Naive thymus-derived CD4-positive, alpha-beta T cell (primary cell): ENCODE measurements at regions of chr5 and their contacts with region 1.

Region 1: DNA sequence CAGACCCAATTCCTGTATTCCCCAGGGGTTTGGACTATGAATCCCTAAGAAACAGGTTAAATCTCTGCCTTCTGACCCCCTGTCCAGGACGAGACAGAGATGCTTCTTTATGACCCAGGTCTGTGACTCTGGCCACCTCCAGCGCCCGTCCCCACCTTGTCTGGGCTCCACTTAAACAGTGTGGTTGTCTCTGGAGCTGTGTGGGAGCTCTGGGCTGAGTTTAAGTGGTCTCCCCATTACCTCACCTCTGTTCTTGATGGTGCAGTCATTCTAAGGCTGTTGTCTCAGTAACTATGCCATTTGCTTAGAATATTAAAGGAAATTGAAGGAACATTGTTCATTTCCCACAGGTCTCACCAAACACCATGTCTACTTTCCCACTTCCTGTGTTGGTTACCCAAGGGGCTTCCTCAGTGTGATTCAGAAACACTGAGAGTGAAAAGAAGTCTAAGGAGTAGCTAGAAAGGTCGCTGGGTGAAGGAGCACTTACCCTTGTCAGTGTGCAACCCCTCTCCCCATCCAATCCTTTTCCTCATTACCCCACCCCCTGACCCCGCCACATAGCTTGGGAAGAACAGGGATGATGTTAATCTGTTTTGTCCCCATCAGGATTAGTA is 127.8 kb upstream of the CKMT2 start:
- DNase-seq: no peak
- ATAC-seq: no peak
- H3K4me3 ChIP-seq: no peak overlapping the region
- H3K4me3 Mint-ChIP-seq: peak overlapping the region in 3 of 10 donors; percentile 31 to 47 (median 45)
- H3K27ac ChIP-seq: no peak overlapping the region
- H3K27ac Mint-ChIP-seq: peak overlapping the region; percentile 21 to 86 (median 64)
- H3K4me1 ChIP-seq: peaks cover 12% of the 10 kb centered on the region in 2 donors
- H3K4me1 Mint-ChIP-seq: peaks cover 10 to 40% (median 33%) of the 10 kb centered on the region in 7 donors
- H3K27me3 ChIP-seq: no peaks in the 10 kb centered on the region
- H3K27me3 Mint-ChIP-seq: no peaks in the 10 kb centered on the region

Region 2: DNA sequence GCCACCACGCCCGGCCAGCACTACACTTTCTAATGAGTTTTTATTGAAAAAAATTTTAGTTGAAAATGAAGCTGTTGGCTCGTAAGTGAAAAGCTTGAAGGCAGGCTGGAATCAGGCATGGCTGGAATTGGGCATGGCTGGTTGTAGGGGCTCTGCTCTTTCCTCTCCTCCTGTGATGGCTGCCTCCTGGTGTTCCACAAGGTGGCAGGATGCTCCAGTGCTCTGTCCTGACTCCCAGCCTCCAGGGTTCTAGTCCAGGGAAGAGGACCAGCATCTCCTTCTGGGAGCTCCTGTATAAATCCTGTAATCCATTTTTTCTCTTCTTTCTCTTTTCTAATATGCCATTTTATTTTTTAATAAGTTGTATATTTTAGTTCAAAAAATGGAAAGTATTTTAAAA is 393.4 kb before region 1 on chr5:
- CTCF ChIA-PET with region 1: no interaction called
- POLR2A ChIA-PET with region 1: no interaction called
- intact Hi-C with region 1: loop called in 1 of 2 experiments (anchors 1 kb)
- DNase-seq: no peak
- ATAC-seq: no peak
- H3K4me3 ChIP-seq: no peak overlapping the region
- H3K4me3 Mint-ChIP-seq: no peak overlapping the region
- H3K27ac ChIP-seq: no peak overlapping the region
- H3K27ac Mint-ChIP-seq: peak overlapping the region in 1 of 9 donors; percentile 72
- H3K4me1 ChIP-seq: no peaks in the 10 kb centered on the region
- H3K4me1 Mint-ChIP-seq: peaks cover 0 to 42% (median 4%) of the 10 kb centered on the region in 7 donors
- H3K27me3 ChIP-seq: no peaks in the 10 kb centered on the region
- H3K27me3 Mint-ChIP-seq: no peaks in the 10 kb centered on the region

Region 3: DNA sequence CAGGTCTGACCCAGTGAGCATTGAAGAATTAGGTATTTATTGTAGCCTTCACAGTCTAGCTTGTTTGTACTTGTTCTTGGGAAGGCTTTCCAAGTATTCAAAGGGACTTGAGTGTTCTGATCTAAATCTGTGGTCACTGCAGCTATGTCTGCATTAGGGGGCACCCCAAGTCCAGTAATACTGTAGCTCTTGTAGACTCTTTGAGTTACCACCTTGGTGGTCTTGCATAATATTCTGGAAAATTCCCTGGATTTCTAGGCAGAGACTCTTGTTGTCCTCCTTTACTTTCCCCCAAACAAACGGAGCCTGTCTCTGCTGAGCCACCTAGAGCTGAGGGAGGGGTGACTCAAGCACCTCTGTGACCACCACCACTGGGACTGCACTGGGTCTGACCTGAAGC is 301.0 kb before region 1 on chr5:
- CTCF ChIA-PET with region 1: no interaction called
- POLR2A ChIA-PET with region 1: no interaction called
- intact Hi-C with region 1: loop called in 1 of 2 experiments (anchors 5 kb)
- DNase-seq: peak in 1 of 9 donors; percentile 5
- ATAC-seq: no peak
- H3K4me3 ChIP-seq: no peak overlapping the region
- H3K4me3 Mint-ChIP-seq: no peak overlapping the region
- H3K27ac ChIP-seq: no peak overlapping the region
- H3K27ac Mint-ChIP-seq: peak overlapping the region in 1 of 9 donors; percentile 57
- H3K4me1 ChIP-seq: no peaks in the 10 kb centered on the region
- H3K4me1 Mint-ChIP-seq: peaks cover 0 to 13% (median 0%) of the 10 kb centered on the region in 7 donors
- H3K27me3 ChIP-seq: no peaks in the 10 kb centered on the region
- H3K27me3 Mint-ChIP-seq: no peaks in the 10 kb centered on the region

Region 4: GRCh38 chr5:80935811-80936385 is 169.5 kb before region 1 on chr5:
- CTCF ChIA-PET with region 1: interaction called, 38 read pairs
- POLR2A ChIA-PET with region 1: no interaction called
- intact Hi-C with region 1: loop called in 1 of 2 experiments (anchors 1 kb)
- DNase-seq: peak in 1 of 9 donors; percentile 15
- ATAC-seq: no peak
- H3K4me3 ChIP-seq: no peak overlapping the region
- H3K4me3 Mint-ChIP-seq: no peak overlapping the region
- H3K27ac ChIP-seq: no peak overlapping the region
- H3K27ac Mint-ChIP-seq: peak overlapping the region in 2 of 9 donors; percentile 16 to 69
- H3K4me1 ChIP-seq: no peaks in the 10 kb centered on the region
- H3K4me1 Mint-ChIP-seq: peaks cover 0 to 13% (median 7%) of the 10 kb centered on the region in 7 donors
- H3K27me3 ChIP-seq: no peaks in the 10 kb centered on the region
- H3K27me3 Mint-ChIP-seq: no peaks in the 10 kb centered on the region

Region 5: DNA sequence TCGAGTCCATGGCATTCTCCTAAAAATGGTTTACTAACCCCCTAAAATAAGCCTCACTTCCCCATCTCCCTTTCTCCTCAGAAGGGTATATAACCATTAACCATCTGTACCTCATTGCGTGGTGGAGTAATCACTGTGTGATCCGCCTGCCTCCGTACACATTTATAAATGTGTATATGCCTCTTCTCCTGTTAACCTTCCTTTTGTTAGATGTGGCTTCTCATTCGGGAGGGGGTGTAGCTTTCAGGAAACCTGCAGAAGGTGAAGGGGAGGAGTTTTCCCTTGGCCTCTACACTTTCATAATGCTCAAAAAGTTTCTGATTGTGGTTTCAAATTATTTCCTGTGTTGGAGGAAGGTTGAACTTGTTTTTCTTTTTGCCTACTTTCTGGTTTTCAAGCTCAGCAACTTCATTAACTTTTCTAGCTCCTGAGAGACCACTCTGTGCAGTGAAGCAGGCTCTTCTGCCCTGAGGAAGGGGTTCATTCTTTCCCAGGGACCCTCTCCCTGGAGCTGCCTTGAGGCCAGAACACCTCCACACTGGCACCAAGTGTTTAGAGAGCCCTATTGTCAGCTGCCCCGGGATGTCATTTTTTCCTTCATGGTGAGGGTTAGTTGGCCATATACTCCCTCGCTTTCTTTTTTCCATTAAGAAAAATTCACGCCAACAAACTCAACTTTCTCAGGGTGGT is 98.3 kb before region 1 on chr5:
- CTCF ChIA-PET with region 1: interaction called, 3 read pairs
- POLR2A ChIA-PET with region 1: interaction called, 3 read pairs
- intact Hi-C with region 1: loop called in 1 of 2 experiments (anchors 1 kb)
- DNase-seq: peak in 8 of 9 donors; percentile 48 to 91 (median 88)
- ATAC-seq: peak; percentile 95
- H3K4me3 ChIP-seq: peak overlapping the region; percentile 53
- H3K4me3 Mint-ChIP-seq: peak overlapping the region; percentile 75 to 95 (median 89)
- H3K27ac ChIP-seq: peak overlapping the region; percentile 80
- H3K27ac Mint-ChIP-seq: peak overlapping the region; percentile 92 to 100 (median 95)
- H3K4me1 ChIP-seq: peaks cover 35 to 64% of the 10 kb centered on the region in 2 donors
- H3K4me1 Mint-ChIP-seq: peaks cover 45 to 93% (median 80%) of the 10 kb centered on the region in 7 donors
- H3K27me3 ChIP-seq: no peaks in the 10 kb centered on the region
- H3K27me3 Mint-ChIP-seq: no peaks in the 10 kb centered on the region

Region 6: DNA sequence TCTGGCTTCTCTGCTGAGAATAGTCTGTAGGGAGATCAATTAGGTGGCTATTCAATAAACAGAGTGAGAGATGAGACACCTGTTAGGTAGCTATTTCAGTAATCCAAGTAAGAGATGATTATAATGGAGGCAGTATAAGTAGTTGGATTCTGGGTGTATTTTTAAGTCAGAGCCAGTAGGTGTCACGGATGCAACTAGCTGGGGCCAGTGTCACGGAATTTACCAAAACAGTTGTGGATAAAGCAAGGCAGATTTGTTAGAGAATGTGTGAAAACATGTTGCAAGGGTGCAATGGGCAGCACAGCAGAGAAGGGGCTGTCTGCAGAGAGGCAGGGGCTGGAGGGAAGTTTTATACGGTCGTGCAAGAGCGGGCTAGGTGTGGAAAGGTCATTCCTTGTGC is 30.3 kb before region 1 on chr5:
- CTCF ChIA-PET with region 1: no interaction called
- POLR2A ChIA-PET with region 1: no interaction called
- intact Hi-C with region 1: no loop called
- DNase-seq: no peak
- ATAC-seq: no peak
- H3K4me3 ChIP-seq: no peak overlapping the region
- H3K4me3 Mint-ChIP-seq: no peak overlapping the region
- H3K27ac ChIP-seq: no peak overlapping the region
- H3K27ac Mint-ChIP-seq: no peak overlapping the region
- H3K4me1 ChIP-seq: no peaks in the 10 kb centered on the region
- H3K4me1 Mint-ChIP-seq: peaks cover 0 to 4% (median 0%) of the 10 kb centered on the region in 7 donors
- H3K27me3 ChIP-seq: no peaks in the 10 kb centered on the region
- H3K27me3 Mint-ChIP-seq: no peaks in the 10 kb centered on the region

Region 7: GRCh38 chr5:81086881-81087281 is 18.5 kb before region 1 on chr5:
- CTCF ChIA-PET with region 1: no interaction called
- POLR2A ChIA-PET with region 1: no interaction called
- intact Hi-C with region 1: no loop called
- DNase-seq: no peak
- ATAC-seq: no peak
- H3K4me3 ChIP-seq: no peak overlapping the region
- H3K4me3 Mint-ChIP-seq: no peak overlapping the region
- H3K27ac ChIP-seq: no peak overlapping the region
- H3K27ac Mint-ChIP-seq: no peak overlapping the region
- H3K4me1 ChIP-seq: no peaks in the 10 kb centered on the region
- H3K4me1 Mint-ChIP-seq: peaks cover 0 to 14% (median 5%) of the 10 kb centered on the region in 7 donors
- H3K27me3 ChIP-seq: no peaks in the 10 kb centered on the region
- H3K27me3 Mint-ChIP-seq: no peaks in the 10 kb centered on the region

Region 8: GRCh38 chr5:81194633-81195333 is 89.4 kb after region 1 on chr5:
- CTCF ChIA-PET with region 1: no interaction called
- POLR2A ChIA-PET with region 1: no interaction called
- intact Hi-C with region 1: loop called in 1 of 2 experiments (anchors 5 kb)
- DNase-seq: peak; percentile 58 to 83 (median 74)
- ATAC-seq: peak; percentile 98
- H3K4me3 ChIP-seq: no peak overlapping the region
- H3K4me3 Mint-ChIP-seq: peak overlapping the region in 8 of 10 donors; percentile 21 to 65 (median 47)
- H3K27ac ChIP-seq: no peak overlapping the region
- H3K27ac Mint-ChIP-seq: peak overlapping the region in 7 of 9 donors; percentile 21 to 82 (median 68)
- H3K4me1 ChIP-seq: peaks cover 0 to 6% of the 10 kb centered on the region in 2 donors
- H3K4me1 Mint-ChIP-seq: peaks cover 3 to 16% (median 9%) of the 10 kb centered on the region in 7 donors
- H3K27me3 ChIP-seq: no peaks in the 10 kb centered on the region
- H3K27me3 Mint-ChIP-seq: no peaks in the 10 kb centered on the region

Region 9: GRCh38 chr5:81288021-81288433 is 182.7 kb after region 1 on chr5:
- CTCF ChIA-PET with region 1: no interaction called
- POLR2A ChIA-PET with region 1: no interaction called
- intact Hi-C with region 1: no loop called
- DNase-seq: no peak
- ATAC-seq: no peak
- H3K4me3 ChIP-seq: no peak overlapping the region
- H3K4me3 Mint-ChIP-seq: no peak overlapping the region
- H3K27ac ChIP-seq: no peak overlapping the region
- H3K27ac Mint-ChIP-seq: no peak overlapping the region
- H3K4me1 ChIP-seq: peaks cover 6 to 7% of the 10 kb centered on the region in 2 donors
- H3K4me1 Mint-ChIP-seq: peaks cover 14 to 56% (median 43%) of the 10 kb centered on the region in 7 donors
- H3K27me3 ChIP-seq: no peaks in the 10 kb centered on the region
- H3K27me3 Mint-ChIP-seq: no peaks in the 10 kb centered on the region